ENCODE measurements at regions of chr17 and their contacts with region 1.

Region 1: GRCh38 chr17:78497115-78497540 is 80.1 kb downstream of the DNAH17 start:
- DNase-seq: peak in 3 of 4 donors; percentile 42 to 72 (median 70)
- ATAC-seq: peak; percentile 94
- H3K4me3 ChIP-seq: no peak overlapping the region
- H3K27ac ChIP-seq: no peak overlapping the region
- H3K4me1 ChIP-seq: peaks cover 0 to 4% of the 10 kb centered on the region in 2 donors
- H3K27me3 ChIP-seq: no peaks in the 10 kb centered on the region
- CTCF ChIP-seq: peak; percentile 65 to 67

Region 2: DNA sequence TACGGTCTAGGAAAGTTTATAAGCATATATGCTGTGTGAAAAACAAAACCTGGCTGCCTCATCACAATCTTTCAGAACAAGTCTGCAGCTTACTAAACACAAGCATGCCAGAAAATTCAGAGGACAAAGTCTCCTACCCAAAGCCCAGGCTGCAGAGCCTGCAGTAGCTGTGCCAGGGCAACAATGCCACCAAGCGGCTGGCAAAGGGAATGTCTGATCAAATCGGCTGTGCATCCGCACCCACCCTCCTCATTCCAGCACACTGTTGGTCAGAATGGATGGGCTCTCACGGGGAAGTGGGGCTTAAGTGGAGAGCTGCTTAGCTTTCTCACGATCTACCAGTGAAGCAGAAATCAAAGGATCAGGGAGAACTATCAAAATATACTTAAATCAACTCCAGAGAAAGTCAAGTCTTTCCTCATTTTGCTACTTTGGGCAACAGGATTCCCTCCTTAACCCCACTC is 211.4 kb after region 1 on chr17:
- intact Hi-C with region 1: loop called in 1 of 2 experiments (anchors 10 kb)
- DNase-seq: peak; percentile 62 to 85 (median 78)
- ATAC-seq: peak; percentile 96
- H3K4me3 ChIP-seq: no peak overlapping the region
- H3K27ac ChIP-seq: no peak overlapping the region
- H3K4me1 ChIP-seq: peaks cover 10 to 52% of the 10 kb centered on the region in 2 donors
- H3K27me3 ChIP-seq: no peaks in the 10 kb centered on the region
- CTCF ChIP-seq: peak; percentile 80 to 81